ENCODE measurements at regions of chr15 and their contacts with region 1.

Region 1: GRCh38 chr15:40307421-40308211 is at the start of gene PLCB2:
- DNase-seq: peak; percentile 80
- H3K4me3 Mint-ChIP-seq: peak within 1 kb of the TSS; percentile 96
- H3K27ac Mint-ChIP-seq: peak within 1 kb of the TSS; percentile 97
- H3K4me1 Mint-ChIP-seq: peaks cover 29% of the 10 kb centered on the region
- H3K27me3 Mint-ChIP-seq: no peaks in the 10 kb centered on the region
- total RNA-seq, gene PLCB2: 65.3 to 70.7 TPM

Region 2: DNA sequence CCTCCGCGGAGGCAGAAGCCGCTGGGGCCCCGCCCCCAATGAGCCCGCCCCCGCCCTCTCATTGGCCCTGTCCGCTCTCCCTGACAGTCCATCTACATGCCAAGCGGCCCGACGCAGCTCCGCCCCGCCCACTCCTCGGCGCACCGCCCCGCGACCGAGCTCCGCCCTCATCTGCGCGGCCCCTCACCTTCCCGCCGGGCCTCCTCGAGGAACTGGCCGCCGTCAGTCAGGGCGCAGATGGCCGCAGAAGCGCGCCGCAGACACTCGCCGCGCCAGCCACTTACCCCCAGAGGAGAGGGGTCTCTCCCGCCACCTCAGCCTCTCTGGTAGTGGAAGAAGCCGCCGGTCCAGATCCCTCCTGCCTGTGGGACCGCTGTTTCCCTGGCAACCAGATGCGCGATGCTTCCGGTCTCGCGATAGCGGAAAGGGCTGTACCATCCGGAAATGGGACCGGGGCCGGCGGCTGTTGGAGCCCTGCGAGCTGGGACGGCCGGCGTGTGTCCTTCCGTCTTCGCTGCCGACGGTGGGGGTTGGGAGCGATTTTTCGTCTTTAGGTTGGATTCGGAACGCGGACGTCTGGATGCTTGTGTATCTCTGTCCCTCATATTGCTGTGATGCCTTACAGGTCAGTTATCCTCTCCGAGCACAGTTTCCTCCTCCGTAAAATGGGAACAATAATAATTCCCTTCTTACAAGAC is 525.0 kb before region 1 on chr15 and contains the start of gene FSIP1:
- CTCF ChIA-PET with region 1: no interaction called
- POLR2A ChIA-PET with region 1: no interaction called
- intact Hi-C with region 1: loop called (anchors 10 kb)
- DNase-seq: peak; percentile 97
- H3K4me3 Mint-ChIP-seq: peak within 1 kb of the TSS; percentile 79
- H3K27ac Mint-ChIP-seq: peak within 1 kb of the TSS; percentile 93
- H3K4me1 Mint-ChIP-seq: peaks cover 41% of the 10 kb centered on the region
- H3K27me3 Mint-ChIP-seq: no peaks in the 10 kb centered on the region
- total RNA-seq, gene FSIP1: 0.29 to 0.68 TPM

Region 3: DNA sequence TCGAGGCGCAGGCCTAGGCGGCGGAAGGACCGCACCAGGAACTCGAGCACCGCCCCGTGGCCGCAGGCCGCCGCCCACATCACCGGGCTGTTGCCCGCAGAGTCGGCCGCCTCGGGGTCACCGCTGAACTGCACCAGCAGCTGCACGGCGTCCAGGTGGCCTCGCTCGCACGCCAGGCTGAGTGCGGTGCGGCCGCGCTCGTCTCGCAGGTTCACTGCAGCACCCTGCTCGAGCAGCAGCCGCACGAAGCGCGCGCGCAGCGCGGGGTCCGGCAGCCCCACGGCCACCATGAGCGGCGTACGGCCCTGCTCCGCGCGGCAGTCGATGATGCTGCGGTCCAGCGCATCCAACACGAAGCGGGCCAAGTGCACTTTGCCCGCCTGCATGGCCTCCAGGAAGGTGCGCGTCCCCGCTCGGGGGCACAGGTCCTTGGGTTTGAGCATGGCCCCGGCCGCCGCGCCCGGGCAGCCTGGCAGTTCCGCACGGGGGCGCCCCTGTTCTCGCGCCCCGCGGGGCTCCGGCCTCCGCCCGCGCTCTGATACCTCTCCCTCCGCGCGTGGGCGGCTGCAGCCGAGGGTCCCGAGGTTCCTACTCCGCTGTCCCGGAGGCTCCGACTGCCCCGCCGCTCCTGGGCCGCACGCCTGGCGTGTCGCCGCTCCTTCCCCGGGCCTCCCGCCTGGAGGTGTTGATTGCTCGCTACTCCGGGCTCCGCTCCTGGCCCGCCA is 25.3 kb before region 1 on chr15:
- CTCF ChIA-PET with region 1: interaction called, 500 read pairs
- POLR2A ChIA-PET with region 1: interaction called, 3 read pairs
- intact Hi-C with region 1: loop called (anchors 1 kb)
- DNase-seq: peak; percentile 57
- H3K4me3 Mint-ChIP-seq: peak overlapping the region; percentile 26
- H3K27ac Mint-ChIP-seq: no peak overlapping the region
- H3K4me1 Mint-ChIP-seq: peaks cover 9% of the 10 kb centered on the region
- H3K27me3 Mint-ChIP-seq: peaks cover 30% of the 10 kb centered on the region

Region 4: GRCh38 chr15:40323239-40323952 is 15.8 kb after region 1 on chr15 and contains the start of gene INAFM2:
- CTCF ChIA-PET with region 1: interaction called, 139 read pairs
- POLR2A ChIA-PET with region 1: interaction called, 13 read pairs
- intact Hi-C with region 1: loop called (anchors 1 kb)
- DNase-seq: peak; percentile 88
- H3K4me3 Mint-ChIP-seq: peak within 1 kb of the TSS; percentile 65
- H3K27ac Mint-ChIP-seq: no peak within 1 kb of the TSS
- H3K4me1 Mint-ChIP-seq: peaks cover 18% of the 10 kb centered on the region
- H3K27me3 Mint-ChIP-seq: no peaks in the 10 kb centered on the region
- total RNA-seq, gene INAFM2: 6.7 to 7.4 TPM

Region 5: GRCh38 chr15:40405501-40406381 is 98.1 kb after region 1 on chr15 and contains the start of gene IVD:
- CTCF ChIA-PET with region 1: interaction called, 15 read pairs
- POLR2A ChIA-PET with region 1: interaction called, 5 read pairs
- intact Hi-C with region 1: no loop called
- DNase-seq: peak; percentile 95
- H3K4me3 Mint-ChIP-seq: peak within 1 kb of the TSS; percentile 69
- H3K27ac Mint-ChIP-seq: peak within 1 kb of the TSS; percentile 65
- H3K4me1 Mint-ChIP-seq: peaks cover 49% of the 10 kb centered on the region
- H3K27me3 Mint-ChIP-seq: no peaks in the 10 kb centered on the region
- total RNA-seq, gene IVD: 37.3 to 38.7 TPM

Measured in activated CD4-positive, alpha-beta memory T cell treated with anti-CD3 and anti-CD28 coated beads for 36 hours (primary cell).